Adrenal gland (tissue), 19 donors: ENCODE measurements at regions of chr13 and their contacts with region 1.

Region 1: DNA sequence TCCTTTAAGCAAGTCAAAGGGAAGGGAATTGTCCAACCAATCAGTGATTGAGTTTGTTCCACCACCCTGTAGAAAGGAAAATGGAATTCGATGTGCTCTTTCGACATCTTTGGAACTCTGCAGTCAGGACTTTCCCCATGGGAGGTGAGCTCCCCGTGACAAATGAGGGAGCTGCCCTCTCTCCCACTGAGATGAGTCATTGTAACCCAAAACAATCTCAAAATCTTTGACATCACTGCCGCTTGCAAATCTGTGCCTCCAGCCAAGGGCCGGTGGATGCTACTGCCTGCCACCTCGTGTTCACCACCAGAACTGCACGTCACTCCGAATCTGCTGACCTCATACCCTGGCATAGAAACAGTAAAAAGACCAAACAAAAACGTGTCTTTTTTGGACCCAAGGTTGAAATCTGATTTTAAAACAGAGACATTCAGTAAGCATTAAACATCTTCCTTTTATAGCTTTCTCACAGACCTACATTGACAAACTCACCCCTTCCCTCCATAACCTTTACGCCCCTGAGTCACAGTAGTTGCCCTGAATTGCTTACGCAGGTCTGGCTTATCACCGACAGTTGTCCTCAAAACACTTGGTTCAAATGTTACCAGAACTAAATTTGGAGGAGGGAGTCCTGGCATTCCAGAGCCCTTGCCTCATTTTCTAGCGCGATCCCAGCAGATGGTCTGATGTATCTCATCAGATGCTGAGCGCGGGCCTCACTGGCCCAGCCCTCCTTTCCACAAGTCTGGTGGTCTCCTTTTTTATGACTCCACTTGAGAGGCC is 105.2 kb downstream of the COL4A2 start:
- DNase-seq: peak; percentile 89 to 97 (median 95)
- H3K4me3 ChIP-seq: no peak overlapping the region
- H3K27ac ChIP-seq: peak overlapping the region; percentile 47 to 93 (median 61)
- H3K4me1 ChIP-seq: peaks cover 10 to 43% of the 10 kb centered on the region in 2 donors
- H3K27me3 ChIP-seq: no peaks in the 10 kb centered on the region
- CTCF ChIP-seq: peak; percentile 47 to 98 (median 87)
- POLR2A ChIP-seq: no peak

Region 2: GRCh38 chr13:110220471-110220870 is 191.9 kb before region 1 on chr13:
- intact Hi-C with region 1: loop called in 1 of 2 experiments (anchors 5 kb)
- DNase-seq: peak in 1 of 7 donors; percentile 4
- H3K4me3 ChIP-seq: no peak overlapping the region
- H3K27ac ChIP-seq: peak overlapping the region in 2 of 5 donors; percentile 73 to 75
- H3K4me1 ChIP-seq: peaks cover 4 to 22% of the 10 kb centered on the region in 2 donors
- H3K27me3 ChIP-seq: no peaks in the 10 kb centered on the region
- CTCF ChIP-seq: no peak
- POLR2A ChIP-seq: no peak

Region 3: DNA sequence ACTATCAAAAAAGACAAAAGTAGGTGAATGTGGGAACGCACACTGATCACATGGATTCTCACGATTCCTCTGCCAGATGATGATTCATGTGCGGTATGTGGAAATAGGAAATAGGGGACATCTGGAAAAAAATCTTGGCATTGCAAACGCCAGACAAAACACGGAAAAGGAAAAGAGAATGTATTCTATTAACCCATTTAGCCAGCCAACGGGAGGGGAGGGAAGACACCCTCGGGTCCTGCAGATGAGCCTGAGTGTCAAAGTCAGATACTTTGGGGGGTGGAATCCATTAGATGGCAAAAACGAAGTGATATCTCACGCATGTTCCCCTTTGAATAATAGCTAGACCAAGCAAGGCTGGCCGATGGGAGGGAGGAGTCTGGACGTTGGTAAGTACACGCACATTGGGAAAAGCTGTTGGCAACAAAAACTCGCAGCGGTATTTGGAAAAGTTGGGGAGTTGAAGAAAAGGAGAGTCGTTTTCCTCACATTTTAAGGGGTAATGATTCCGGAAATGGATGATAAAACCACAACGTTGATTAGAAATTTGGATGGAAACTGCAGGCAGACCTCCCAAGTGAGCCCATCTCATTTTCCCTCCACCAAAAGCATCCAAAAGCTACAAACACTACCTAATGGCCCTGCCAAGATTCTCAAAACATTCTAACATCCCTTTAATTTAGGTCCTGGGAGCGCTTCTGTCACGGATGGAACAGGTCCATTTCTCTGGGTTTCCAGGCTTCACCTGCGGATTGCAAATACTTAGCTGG is 179.0 kb before region 1 on chr13:
- intact Hi-C with region 1: loop called in 1 of 2 experiments (anchors 5 kb)
- DNase-seq: peak in 3 of 7 donors; percentile 32 to 68 (median 34)
- H3K4me3 ChIP-seq: no peak overlapping the region
- H3K27ac ChIP-seq: peak overlapping the region in 3 of 5 donors; percentile 19 to 84 (median 66)
- H3K4me1 ChIP-seq: peaks cover 0 to 8% of the 10 kb centered on the region in 2 donors
- H3K27me3 ChIP-seq: no peaks in the 10 kb centered on the region
- CTCF ChIP-seq: no peak
- POLR2A ChIP-seq: no peak

Region 4: DNA sequence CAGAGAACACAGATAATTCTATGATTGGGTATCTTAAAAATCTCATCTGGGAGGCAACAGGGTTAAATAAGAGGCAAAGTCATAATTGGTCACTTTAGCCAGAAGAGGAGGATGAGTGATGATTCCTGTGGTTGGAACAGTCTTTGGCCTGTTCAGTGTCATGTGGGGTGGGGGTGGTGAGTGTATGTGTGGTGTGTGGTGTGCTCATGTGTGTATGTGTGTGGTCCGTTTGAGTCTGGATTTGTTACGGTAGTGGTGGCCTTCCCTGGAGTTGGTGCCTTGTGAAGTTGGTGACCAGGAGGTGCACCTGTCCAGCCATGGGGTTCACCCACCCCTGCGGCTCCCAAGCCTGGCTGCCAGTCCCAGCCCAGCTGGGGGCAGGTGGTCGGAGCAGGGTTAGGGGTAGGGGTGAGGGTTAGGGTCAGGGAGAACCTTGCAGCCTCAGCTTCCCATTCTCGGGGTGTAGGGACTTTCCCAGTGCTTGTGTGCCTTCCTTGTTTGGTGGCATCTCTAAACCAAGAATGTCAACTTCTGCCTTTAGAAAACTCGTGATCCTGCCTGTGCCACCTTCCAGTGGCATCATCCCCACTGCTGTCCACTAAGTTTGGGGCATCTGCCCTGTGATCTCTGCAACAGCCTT is 51.7 kb after region 1 on chr13:
- intact Hi-C with region 1: no loop called
- DNase-seq: no peak
- H3K4me3 ChIP-seq: no peak overlapping the region
- H3K27ac ChIP-seq: no peak overlapping the region
- H3K4me1 ChIP-seq: no peaks in the 10 kb centered on the region
- H3K27me3 ChIP-seq: no peaks in the 10 kb centered on the region
- CTCF ChIP-seq: no peak
- POLR2A ChIP-seq: no peak